PC-9 (cell line): ENCODE measurements at regions of chr2 and their contacts with region 1.

Region 1: GRCh38 chr2:31429759-31430438 is 15.4 kb upstream of the XDH start:
- DNase-seq: peak; percentile 73 to 86
- H3K4me3 ChIP-seq: 0 out of 2 replicates have a peak overlapping the region, but pooled peaks have one; percentile 4
- H3K27ac ChIP-seq: peak overlapping the region; percentile 72
- H3K4me1 ChIP-seq: peaks cover 30% of the 10 kb centered on the region
- H3K27me3 ChIP-seq: no peaks in the 10 kb centered on the region
- CTCF ChIP-seq: no peak

Region 2: DNA sequence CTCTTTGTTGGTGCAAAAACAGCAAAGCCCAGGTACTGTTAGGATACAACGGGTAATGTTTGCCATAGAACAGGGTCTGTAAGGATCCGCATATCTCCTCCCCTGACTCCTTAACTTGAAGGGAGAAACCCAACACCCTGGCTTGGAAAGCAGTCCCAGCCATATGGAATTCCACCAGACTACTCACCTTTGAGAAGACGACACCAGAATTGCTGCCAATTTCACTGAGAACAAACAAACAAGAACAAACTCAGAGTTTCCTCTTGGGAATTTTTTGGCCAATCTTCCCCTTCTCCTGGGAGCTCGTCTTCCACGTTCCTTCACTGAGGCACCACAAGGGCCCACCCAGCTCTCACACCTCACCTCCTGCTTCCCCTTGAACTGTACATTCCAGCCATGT is 241.8 kb before region 1 on chr2:
- CTCF ChIA-PET with region 1: no interaction called
- POLR2A ChIA-PET with region 1: no interaction called
- intact Hi-C with region 1: no loop called
- DNase-seq: no peak
- H3K4me3 ChIP-seq: no peak overlapping the region
- H3K27ac ChIP-seq: no peak overlapping the region
- H3K4me1 ChIP-seq: no peaks in the 10 kb centered on the region
- H3K27me3 ChIP-seq: 0 out of 2 replicates have a peak, but pooled peaks cover 4% of the 10 kb centered on the region
- CTCF ChIP-seq: no peak

Region 3: DNA sequence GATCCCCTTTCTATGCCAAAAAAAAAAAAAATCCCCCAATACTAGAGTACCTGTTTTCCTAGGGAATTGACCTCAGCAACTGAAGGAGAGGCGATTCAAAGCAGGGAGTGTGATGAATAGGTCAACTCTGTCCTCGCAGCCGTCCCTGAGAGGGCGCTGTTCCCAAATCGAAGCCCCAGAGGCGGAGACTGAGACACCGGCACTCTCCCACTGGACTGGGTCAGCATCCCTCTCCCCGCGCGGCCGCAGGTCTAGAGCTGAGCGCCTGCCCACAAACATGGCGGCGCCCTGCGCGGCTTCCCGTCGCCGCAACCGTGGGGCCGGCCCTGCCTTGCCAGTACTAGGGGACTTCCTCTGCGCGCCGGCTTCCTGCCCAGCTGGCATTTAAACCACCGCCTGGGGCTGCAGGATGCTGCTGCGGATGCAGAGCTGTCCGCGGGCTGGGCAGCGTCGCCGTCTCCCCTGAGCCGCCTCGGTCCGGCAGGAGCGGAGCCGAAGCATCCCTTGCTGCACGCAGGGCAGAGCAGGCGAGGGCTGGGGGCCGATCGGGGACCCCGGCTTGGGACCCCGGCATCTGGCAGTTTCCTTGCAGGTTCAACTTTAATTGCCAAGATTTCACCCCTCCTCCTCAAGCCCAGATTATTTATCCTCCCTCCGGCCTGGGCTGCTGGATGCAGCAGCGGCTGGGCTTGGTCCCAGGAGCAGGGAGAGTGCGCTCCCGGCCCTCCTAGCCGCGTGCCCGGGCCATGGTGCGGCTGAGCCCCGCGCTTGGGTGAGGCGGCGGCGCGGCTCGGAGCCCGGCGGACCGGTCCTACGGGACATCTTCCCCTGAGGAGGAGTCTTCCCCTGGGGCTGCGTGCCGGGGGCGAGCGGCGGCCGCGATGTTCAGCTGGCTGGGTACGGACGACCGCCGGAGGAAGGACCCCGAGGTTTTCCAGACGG is 195.9 kb before region 1 on chr2 and contains the start of gene EHD3:
- CTCF ChIA-PET with region 1: no interaction called
- POLR2A ChIA-PET with region 1: no interaction called
- intact Hi-C with region 1: loop called (anchors 2 kb)
- DNase-seq: peak; percentile 69 to 82
- H3K4me3 ChIP-seq: peak within 1 kb of the TSS; percentile 62
- H3K27ac ChIP-seq: no peak within 1 kb of the TSS
- H3K4me1 ChIP-seq: peaks cover 10% of the 10 kb centered on the region
- H3K27me3 ChIP-seq: no peaks in the 10 kb centered on the region
- CTCF ChIP-seq: peak; percentile 73
- total RNA-seq, gene EHD3: 1.8 and 1.9 TPM in 2 replicates